Activated CD8-positive, alpha-beta memory T cell treated with anti-CD3 and anti-CD28 coated beads, Interleukin-2, amount 10 ng/mL, durations not matched to agents 7 days and 5 days (primary cell): ENCODE measurements at regions of chr7 and their contacts with region 1.

Region 1: DNA sequence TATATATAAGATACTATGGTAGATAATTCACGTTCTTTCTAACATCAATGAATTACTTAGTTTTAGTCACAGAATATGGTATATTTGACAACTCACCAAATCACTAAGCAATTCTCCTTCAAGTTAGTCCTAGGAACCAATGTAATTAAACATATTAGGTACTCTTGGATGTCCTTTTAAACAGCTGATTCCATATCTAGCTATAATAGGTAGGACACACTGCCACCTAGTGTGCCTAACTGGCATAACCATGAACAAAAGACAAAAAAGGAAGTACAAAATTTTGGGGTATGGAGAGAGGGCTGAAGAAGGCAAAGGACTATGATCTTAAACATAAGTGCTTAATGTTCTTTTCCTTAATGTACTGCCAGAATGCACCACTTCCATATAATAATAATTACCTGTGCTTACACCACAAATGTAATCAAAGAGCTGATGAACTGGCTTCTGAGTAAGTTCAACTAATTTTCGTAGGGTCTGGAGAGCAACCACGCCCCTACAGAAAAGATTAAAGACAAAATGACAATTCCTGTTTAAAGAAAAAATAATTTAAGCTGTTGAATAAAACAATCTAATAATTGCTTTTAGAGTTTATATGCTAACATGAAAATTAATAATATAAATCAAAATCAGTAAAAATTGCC is 28.7 kb downstream of the PNPLA8 start:
- DNase-seq: peak; percentile 52
- ATAC-seq: peak; percentile 23
- H3K4me3 Mint-ChIP-seq: no peak overlapping the region
- H3K27ac Mint-ChIP-seq: no peak overlapping the region
- H3K4me1 Mint-ChIP-seq: no peaks in the 10 kb centered on the region
- H3K27me3 Mint-ChIP-seq: no peaks in the 10 kb centered on the region

Region 2: GRCh38 chr7:108181073-108181985 is 315.9 kb before region 1 on chr7:
- CTCF ChIA-PET with region 1: interaction called, 10 read pairs
- DNase-seq: no peak
- ATAC-seq: no peak
- H3K4me3 Mint-ChIP-seq: no peak overlapping the region
- H3K27ac Mint-ChIP-seq: no peak overlapping the region
- H3K4me1 Mint-ChIP-seq: no peaks in the 10 kb centered on the region
- H3K27me3 Mint-ChIP-seq: peaks cover 10% of the 10 kb centered on the region

Region 3: DNA sequence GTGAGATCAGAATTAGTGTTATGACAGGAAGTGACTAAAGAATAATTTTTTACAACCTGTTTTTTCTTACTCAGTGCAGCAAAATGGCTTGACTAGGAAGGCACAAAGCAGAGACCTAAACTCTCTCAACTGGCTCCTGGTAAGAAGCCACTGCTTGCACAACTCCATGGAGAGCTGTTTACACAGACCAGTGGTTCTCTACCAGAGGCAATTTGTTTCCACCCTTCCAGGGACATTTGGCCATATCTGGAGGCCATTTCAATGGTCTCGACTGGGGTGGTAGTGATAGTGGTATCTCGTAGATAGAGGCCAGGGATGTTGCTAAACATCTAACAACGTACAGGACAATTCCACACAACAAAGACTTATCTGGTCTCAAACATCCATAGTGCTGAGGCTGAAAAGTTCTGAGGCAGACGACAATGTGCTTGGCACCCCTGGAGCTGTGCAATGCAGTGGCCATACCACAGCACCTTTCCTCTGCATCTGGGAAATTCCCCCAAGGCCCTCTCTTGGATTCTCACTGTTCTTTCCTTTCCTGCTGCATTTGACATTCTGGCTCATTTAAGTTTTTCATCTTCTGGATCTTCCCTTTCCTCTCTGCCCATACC is 261.6 kb before region 1 on chr7:
- CTCF ChIA-PET with region 1: no interaction called
- DNase-seq: no peak
- ATAC-seq: no peak
- H3K4me3 Mint-ChIP-seq: no peak overlapping the region
- H3K27ac Mint-ChIP-seq: no peak overlapping the region
- H3K4me1 Mint-ChIP-seq: no peaks in the 10 kb centered on the region
- H3K27me3 Mint-ChIP-seq: peaks cover 12% of the 10 kb centered on the region